ENCODE measurements at regions of chr19 and their contacts with region 1.

Region 1: GRCh38 chr19:37370880-37371661 is at the start of gene ZNF527:
- DNase-seq: peak; percentile 96 to 98 (median 97)
- H3K4me3 ChIP-seq: peak within 1 kb of the TSS; percentile 63 to 86
- H3K4me3 Mint-ChIP-seq: peak within 1 kb of the TSS; percentile 97 to 100 (median 98)
- H3K27ac ChIP-seq: peak within 1 kb of the TSS; percentile 78
- H3K27ac Mint-ChIP-seq: peak within 1 kb of the TSS; percentile 97 to 99 (median 98)
- H3K4me1 ChIP-seq: peaks cover 7% of the 10 kb centered on the region
- H3K4me1 Mint-ChIP-seq: peaks cover 9 to 28% (median 16%) of the 10 kb centered on the region in 4 donors
- H3K27me3 ChIP-seq: no peaks in the 10 kb centered on the region
- H3K27me3 Mint-ChIP-seq: no peaks in the 10 kb centered on the region
- total RNA-seq, gene ZNF527: 12.7 to 13.3 TPM

Region 2: GRCh38 chr19:36915992-36916830 is 454.9 kb before region 1 on chr19 and contains the starts of genes ZNF568 and ZNF829:
- CTCF ChIA-PET with region 1: no interaction called
- POLR2A ChIA-PET with region 1: no interaction called
- intact Hi-C with region 1: loop called (anchors 2 kb)
- DNase-seq: peak; percentile 92 to 98 (median 95)
- H3K4me3 ChIP-seq: peak within 1 kb of the TSS; percentile 60 to 88
- H3K4me3 Mint-ChIP-seq: peak within 1 kb of the TSS; percentile 84 to 97 (median 94)
- H3K27ac ChIP-seq: peak within 1 kb of the TSS; percentile 93
- H3K27ac Mint-ChIP-seq: peak within 1 kb of the TSS; percentile 81 to 97 (median 96)
- H3K4me1 ChIP-seq: peaks cover 14% of the 10 kb centered on the region
- H3K4me1 Mint-ChIP-seq: peaks cover 19 to 39% (median 28%) of the 10 kb centered on the region in 4 donors
- H3K27me3 ChIP-seq: no peaks in the 10 kb centered on the region
- H3K27me3 Mint-ChIP-seq: no peaks in the 10 kb centered on the region
- total RNA-seq, gene ZNF568: 18.8 to 20.3 TPM
- total RNA-seq, gene ZNF829: 8.5 to 9.8 TPM

Region 3: GRCh38 chr19:37172368-37173366 is 198.4 kb before region 1 on chr19 and contains the start of gene ZNF585A:
- CTCF ChIA-PET with region 1: no interaction called
- POLR2A ChIA-PET with region 1: interaction called, 10 read pairs
- intact Hi-C with region 1: loop called (anchors 1 kb)
- DNase-seq: peak; percentile 90 to 94 (median 92)
- H3K4me3 ChIP-seq: peak within 1 kb of the TSS; percentile 81 to 82
- H3K4me3 Mint-ChIP-seq: peak within 1 kb of the TSS in 3 of 8 donors; percentile 12 to 51 (median 26)
- H3K27ac ChIP-seq: peak within 1 kb of the TSS; percentile 61
- H3K27ac Mint-ChIP-seq: no peak within 1 kb of the TSS
- H3K4me1 ChIP-seq: peaks cover 17% of the 10 kb centered on the region
- H3K4me1 Mint-ChIP-seq: peaks cover 0 to 2% (median 0%) of the 10 kb centered on the region in 4 donors
- H3K27me3 ChIP-seq: no peaks in the 10 kb centered on the region
- H3K27me3 Mint-ChIP-seq: no peaks in the 10 kb centered on the region
- total RNA-seq, gene ZNF585A: 16.5 to 25.4 TPM

Region 4: GRCh38 chr19:37506387-37507166 is 135.5 kb after region 1 on chr19 and contains the start of gene ZNF793:
- CTCF ChIA-PET with region 1: no interaction called
- POLR2A ChIA-PET with region 1: interaction called, 26 read pairs
- intact Hi-C with region 1: loop called (anchors 1 kb)
- DNase-seq: peak; percentile 85 to 88 (median 87)
- H3K4me3 ChIP-seq: peak within 1 kb of the TSS; percentile 57 to 78
- H3K4me3 Mint-ChIP-seq: no peak within 1 kb of the TSS
- H3K27ac ChIP-seq: peak within 1 kb of the TSS; percentile 88
- H3K27ac Mint-ChIP-seq: no peak within 1 kb of the TSS
- H3K4me1 ChIP-seq: peaks cover 17% of the 10 kb centered on the region
- H3K4me1 Mint-ChIP-seq: peaks cover 0 to 2% (median 0%) of the 10 kb centered on the region in 4 donors
- H3K27me3 ChIP-seq: no peaks in the 10 kb centered on the region
- H3K27me3 Mint-ChIP-seq: no peaks in the 10 kb centered on the region
- total RNA-seq, gene ZNF793: 10.2 to 13.8 TPM

Region 5: GRCh38 chr19:37779127-37780005 is 408.3 kb after region 1 on chr19 and contains the start of gene ZNF573:
- CTCF ChIA-PET with region 1: no interaction called
- POLR2A ChIA-PET with region 1: interaction called, 5 read pairs
- intact Hi-C with region 1: loop called (anchors 1 kb)
- DNase-seq: peak; percentile 87 to 99 (median 91)
- H3K4me3 ChIP-seq: peak within 1 kb of the TSS; percentile 74 to 89
- H3K4me3 Mint-ChIP-seq: peak within 1 kb of the TSS; percentile 90 to 99 (median 94)
- H3K27ac ChIP-seq: peak within 1 kb of the TSS; percentile 90
- H3K27ac Mint-ChIP-seq: peak within 1 kb of the TSS; percentile 86 to 100 (median 98)
- H3K4me1 ChIP-seq: peaks cover 18% of the 10 kb centered on the region
- H3K4me1 Mint-ChIP-seq: peaks cover 24 to 46% (median 35%) of the 10 kb centered on the region in 4 donors
- H3K27me3 ChIP-seq: no peaks in the 10 kb centered on the region
- H3K27me3 Mint-ChIP-seq: no peaks in the 10 kb centered on the region
- total RNA-seq, gene ZNF573: 30.5 to 31.1 TPM